ENCODE measurements at regions of chr2 and their contacts with region 1.

Region 1: GRCh38 chr2:64052468-64053241 is 33.4 kb upstream of the VPS54 start:
- DNase-seq: peak; percentile 39
- H3K4me3 ChIP-seq: no peak overlapping the region
- H3K27ac ChIP-seq: peak overlapping the region in 1 of 2 experiments; percentile 93; a peak in 2 of 4 replicates
- H3K4me1 ChIP-seq: peaks cover 0 to 19% of the 10 kb centered on the region in 2 experiments; a peak in 2 of 4 replicates
- H3K27me3 ChIP-seq: no peaks in the 10 kb centered on the region
- CTCF ChIP-seq: no peak
- EP300 ChIP-seq: peak in 1 of 2 experiments; percentile 72; a peak in 2 of 4 replicates
- RAD21 ChIP-seq: no peak

Region 2: GRCh38 chr2:64036034-64036705 is 16.5 kb before region 1 on chr2:
- CTCF ChIA-PET with region 1: interaction called, 14 read pairs
- POLR2A ChIA-PET with region 1: no interaction called
- DNase-seq: no peak
- H3K4me3 ChIP-seq: no peak overlapping the region
- H3K27ac ChIP-seq: peak overlapping the region in 1 of 2 experiments; percentile 7; a peak in 1 of 4 replicates
- H3K4me1 ChIP-seq: peaks cover 0 to 10% of the 10 kb centered on the region in 2 experiments; a peak in 1 of 4 replicates
- H3K27me3 ChIP-seq: no peaks in the 10 kb centered on the region
- CTCF ChIP-seq: no peak
- EP300 ChIP-seq: no peak
- RAD21 ChIP-seq: no peak

Region 3: GRCh38 chr2:64133828-64134227 is 81.2 kb after region 1 on chr2:
- CTCF ChIA-PET with region 1: interaction called, 10 read pairs
- POLR2A ChIA-PET with region 1: no interaction called
- DNase-seq: no peak
- H3K4me3 ChIP-seq: no peak overlapping the region
- H3K27ac ChIP-seq: peak overlapping the region; percentile 58 to 83; a peak in 3 of 4 replicates
- H3K4me1 ChIP-seq: peaks cover 17 to 31% of the 10 kb centered on the region in 2 experiments; a peak in 3 of 4 replicates
- H3K27me3 ChIP-seq: no peaks in the 10 kb centered on the region
- CTCF ChIP-seq: no peak
- EP300 ChIP-seq: peak in 1 of 2 experiments; percentile 72; a peak in 2 of 4 replicates
- RAD21 ChIP-seq: no peak

Region 4: DNA sequence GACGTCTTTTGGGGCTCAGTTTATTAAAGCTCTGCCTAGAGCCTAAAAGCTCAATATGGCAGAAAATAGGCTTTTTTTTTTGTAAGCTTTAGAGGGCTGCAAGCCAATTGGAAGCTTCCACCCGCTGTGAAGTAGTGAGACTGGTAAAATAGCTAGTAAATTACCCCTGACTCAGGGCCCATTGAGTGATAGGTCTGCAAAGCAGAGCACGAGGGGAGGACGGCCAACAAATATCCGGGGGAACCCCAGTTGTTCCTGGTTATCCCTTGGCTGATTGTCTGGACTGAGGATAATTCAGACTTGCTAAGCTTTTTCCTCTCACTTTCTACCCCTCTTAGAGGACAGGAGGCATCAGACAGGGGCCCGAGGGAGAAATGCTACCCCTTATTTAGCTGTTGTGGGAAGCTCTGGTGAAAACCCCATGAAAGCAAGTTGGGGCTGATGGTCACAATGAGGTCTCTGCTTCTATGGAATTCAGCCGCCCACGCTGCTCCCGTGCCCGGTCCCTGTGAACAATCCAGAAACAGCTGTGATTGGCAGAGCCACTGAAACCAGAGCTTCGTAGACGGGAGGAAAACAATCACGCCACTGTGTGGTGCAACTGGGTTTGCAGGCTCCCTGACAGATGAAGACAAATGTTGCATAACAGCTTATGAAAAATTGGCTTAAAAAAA is 259.4 kb after region 1 on chr2:
- CTCF ChIA-PET with region 1: interaction called, 32 read pairs
- POLR2A ChIA-PET with region 1: no interaction called
- DNase-seq: peak; percentile 42
- H3K4me3 ChIP-seq: no peak overlapping the region
- H3K27ac ChIP-seq: no peak overlapping the region
- H3K4me1 ChIP-seq: peaks cover 3 to 9% of the 10 kb centered on the region in 2 experiments; a peak in 2 of 4 replicates
- H3K27me3 ChIP-seq: peaks cover 7% of the 10 kb centered on the region; the same call in 1 of the 2 replicates
- CTCF ChIP-seq: peak; percentile 49
- EP300 ChIP-seq: no peak
- RAD21 ChIP-seq: peak; percentile 67

Region 5: GRCh38 chr2:64318476-64318748 is 265.8 kb after region 1 on chr2:
- CTCF ChIA-PET with region 1: interaction called, 32 read pairs
- POLR2A ChIA-PET with region 1: no interaction called
- DNase-seq: no peak
- H3K4me3 ChIP-seq: no peak overlapping the region
- H3K27ac ChIP-seq: no peak overlapping the region
- H3K4me1 ChIP-seq: peaks cover 0 to 2% of the 10 kb centered on the region in 2 experiments; a peak in 1 of 4 replicates
- H3K27me3 ChIP-seq: peaks cover 3% of the 10 kb centered on the region; the same call in 1 of the 2 replicates
- CTCF ChIP-seq: no peak
- EP300 ChIP-seq: no peak
- RAD21 ChIP-seq: no peak

Region 6: GRCh38 chr2:64488050-64488974 is 435.7 kb after region 1 on chr2:
- CTCF ChIA-PET with region 1: interaction called, 16 read pairs
- POLR2A ChIA-PET with region 1: no interaction called
- DNase-seq: peak; percentile 30
- H3K4me3 ChIP-seq: peak overlapping the region in 1 of 2 experiments; percentile 47; a peak in 1 of 4 replicates
- H3K27ac ChIP-seq: no peak overlapping the region; a peak in 1 of 4 replicates
- H3K4me1 ChIP-seq: peaks cover 0 to 16% of the 10 kb centered on the region in 2 experiments; a peak in 1 of 4 replicates
- H3K27me3 ChIP-seq: no peaks in the 10 kb centered on the region; the same call in 1 of the 2 replicates
- CTCF ChIP-seq: peak; percentile 79
- EP300 ChIP-seq: no peak
- RAD21 ChIP-seq: peak; percentile 59

Measured in SK-N-SH (cell line).